PC-9 (cell line): ENCODE measurements at regions of chr1 and their contacts with region 1.

Region 1: GRCh38 chr1:243525085-243525487 is 269.2 kb downstream of the SDCCAG8 start:
- DNase-seq: no peak
- H3K4me3 ChIP-seq: no peak overlapping the region
- H3K27ac ChIP-seq: peak overlapping the region; percentile 62
- H3K4me1 ChIP-seq: peaks cover 9% of the 10 kb centered on the region
- H3K27me3 ChIP-seq: no peaks in the 10 kb centered on the region
- CTCF ChIP-seq: no peak

Region 2: GRCh38 chr1:243390162-243390791 is 134.8 kb before region 1 on chr1:
- CTCF ChIA-PET with region 1: interaction called, 11 read pairs
- POLR2A ChIA-PET with region 1: no interaction called
- intact Hi-C with region 1: no loop called
- DNase-seq: no peak
- H3K4me3 ChIP-seq: no peak overlapping the region
- H3K27ac ChIP-seq: no peak overlapping the region
- H3K4me1 ChIP-seq: no peaks in the 10 kb centered on the region
- H3K27me3 ChIP-seq: no peaks in the 10 kb centered on the region
- CTCF ChIP-seq: no peak

Region 3: GRCh38 chr1:243549108-243549507 is 24.0 kb after region 1 on chr1:
- CTCF ChIA-PET with region 1: no interaction called
- POLR2A ChIA-PET with region 1: no interaction called
- intact Hi-C with region 1: no loop called
- DNase-seq: peak; percentile 4 to 59
- H3K4me3 ChIP-seq: no peak overlapping the region
- H3K27ac ChIP-seq: no peak overlapping the region
- H3K4me1 ChIP-seq: peaks cover 11% of the 10 kb centered on the region; the same call in 1 of the 2 replicates
- H3K27me3 ChIP-seq: no peaks in the 10 kb centered on the region
- CTCF ChIP-seq: no peak